Caco-2 (cell line): ENCODE measurements at regions of chr1 and their contacts with region 1.

Region 1: DNA sequence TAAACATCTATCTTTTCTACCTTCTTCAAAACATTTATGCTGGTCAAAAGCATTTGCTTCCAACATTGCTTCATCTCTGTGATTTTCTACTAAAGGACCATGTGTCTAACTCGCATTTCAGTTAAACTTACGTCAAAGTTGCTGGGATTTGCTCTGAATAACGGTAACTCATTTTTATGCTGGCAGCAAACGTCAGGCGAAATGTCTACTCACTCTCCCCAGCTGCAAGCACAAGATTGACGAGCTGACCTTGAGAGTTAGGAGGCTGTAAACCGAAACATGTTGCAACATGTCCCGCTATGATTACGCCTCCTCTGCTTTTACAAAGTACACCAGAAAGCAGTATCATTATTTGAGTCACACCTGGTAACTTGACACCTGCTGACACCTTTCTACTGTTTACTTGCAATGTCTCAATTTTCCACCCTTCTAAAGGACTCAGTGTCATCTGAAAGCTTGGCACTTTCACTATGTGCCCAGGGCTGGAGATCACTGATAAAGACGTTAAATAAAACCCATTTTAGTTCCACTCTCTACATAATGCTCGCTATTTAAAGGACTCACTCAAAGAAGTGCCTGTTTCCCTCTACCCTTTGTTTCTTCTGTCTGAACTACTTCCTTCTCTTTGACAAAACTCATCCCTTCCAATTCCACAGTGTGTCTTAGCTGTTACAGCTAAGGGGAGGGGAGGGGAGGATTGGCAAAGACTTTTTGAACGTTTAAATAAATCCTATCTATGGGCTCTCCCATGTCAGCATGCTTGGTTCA is 111.9 kb downstream of the PTPN14 start:
- DNase-seq: peak; percentile 74 to 82
- H3K4me3 ChIP-seq: no peak overlapping the region
- H3K4me3 Mint-ChIP-seq: peak overlapping the region; percentile 19
- H3K27ac Mint-ChIP-seq: peak overlapping the region; percentile 63
- H3K4me1 ChIP-seq: peaks cover 63% of the 10 kb centered on the region
- H3K4me1 Mint-ChIP-seq: peaks cover 66% of the 10 kb centered on the region
- H3K27me3 ChIP-seq: no peaks in the 10 kb centered on the region
- H3K27me3 Mint-ChIP-seq: no peaks in the 10 kb centered on the region
- CTCF ChIP-seq: no peak

Region 2: GRCh38 chr1:214473387-214473786 is 33.9 kb after region 1 on chr1:
- CTCF ChIA-PET with region 1: no interaction called
- POLR2A ChIA-PET with region 1: no interaction called
- intact Hi-C with region 1: loop called (anchors 1 kb)
- DNase-seq: peak in 1 of 2 experiments; percentile 40
- H3K4me3 ChIP-seq: no peak overlapping the region
- H3K4me3 Mint-ChIP-seq: peak overlapping the region; percentile 31
- H3K27ac Mint-ChIP-seq: peak overlapping the region; percentile 80
- H3K4me1 ChIP-seq: peaks cover 82% of the 10 kb centered on the region
- H3K4me1 Mint-ChIP-seq: peaks cover 62% of the 10 kb centered on the region
- H3K27me3 ChIP-seq: no peaks in the 10 kb centered on the region
- H3K27me3 Mint-ChIP-seq: no peaks in the 10 kb centered on the region
- CTCF ChIP-seq: no peak